CD14-positive monocyte (primary cell): ENCODE measurements at regions of chr7 and their contacts with region 1.

Region 1: DNA sequence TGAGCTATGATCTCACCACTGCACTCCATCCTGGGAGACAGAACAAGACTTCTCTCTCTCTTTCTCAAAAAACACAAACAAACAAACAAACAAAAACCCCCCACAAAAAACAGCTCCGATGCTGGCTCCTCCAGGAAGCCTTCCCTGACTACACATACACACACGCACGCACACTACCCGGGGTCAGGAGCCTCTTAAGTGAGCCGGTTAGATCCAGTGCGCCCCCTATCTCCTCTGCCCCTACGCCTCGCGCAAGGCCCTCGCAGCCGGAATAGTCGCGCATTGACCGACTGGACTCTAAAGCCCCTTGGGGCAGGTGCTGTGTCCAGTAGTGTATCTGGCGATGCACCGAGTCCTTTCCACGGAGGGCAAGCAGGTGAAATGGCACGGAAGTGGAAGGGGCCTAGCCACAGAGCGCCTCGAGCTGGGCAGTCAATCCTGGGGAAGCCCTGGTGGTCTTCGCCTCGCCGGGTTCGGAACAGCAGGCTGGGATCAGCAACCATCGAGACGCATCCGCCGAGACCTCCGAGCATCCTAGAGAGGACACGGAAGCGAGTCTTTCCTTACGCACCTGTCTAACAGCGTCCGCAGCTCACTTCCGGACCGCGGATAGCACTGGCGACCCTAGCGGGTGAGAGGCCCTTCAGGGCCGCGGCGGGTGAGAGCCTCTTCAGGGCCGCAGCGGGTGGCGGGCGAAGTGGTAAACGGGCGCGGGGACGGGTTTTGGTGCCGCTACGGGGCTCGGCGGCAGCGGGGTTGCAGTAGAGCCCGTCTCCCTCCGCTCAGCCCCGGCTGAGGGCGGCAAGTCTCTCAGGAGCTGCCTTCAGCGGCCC is at the start of gene ZSCAN25:
- DNase-seq: peak; percentile 75 to 77 (median 76)
- H3K4me3 ChIP-seq: peak within 1 kb of the TSS; percentile 62 to 99 (median 65)
- H3K4me3 Mint-ChIP-seq: peak within 1 kb of the TSS; percentile 97
- H3K27ac ChIP-seq: peak within 1 kb of the TSS; percentile 50 to 90
- H3K27ac Mint-ChIP-seq: peak within 1 kb of the TSS; percentile 79 to 93 (median 88)
- H3K4me1 ChIP-seq: peaks cover 13 to 20% of the 10 kb centered on the region in 2 donors
- H3K4me1 Mint-ChIP-seq: peaks cover 24% of the 10 kb centered on the region
- H3K27me3 ChIP-seq: peaks cover 2 to 13% of the 10 kb centered on the region in 2 donors
- H3K27me3 Mint-ChIP-seq: peaks cover 6 to 15% (median 9%) of the 10 kb centered on the region in 3 donors
- CTCF ChIP-seq: no peak
- polyA plus RNA-seq, gene ZSCAN25: 4.3 to 7.3 (median 6.1) TPM

Region 2: DNA sequence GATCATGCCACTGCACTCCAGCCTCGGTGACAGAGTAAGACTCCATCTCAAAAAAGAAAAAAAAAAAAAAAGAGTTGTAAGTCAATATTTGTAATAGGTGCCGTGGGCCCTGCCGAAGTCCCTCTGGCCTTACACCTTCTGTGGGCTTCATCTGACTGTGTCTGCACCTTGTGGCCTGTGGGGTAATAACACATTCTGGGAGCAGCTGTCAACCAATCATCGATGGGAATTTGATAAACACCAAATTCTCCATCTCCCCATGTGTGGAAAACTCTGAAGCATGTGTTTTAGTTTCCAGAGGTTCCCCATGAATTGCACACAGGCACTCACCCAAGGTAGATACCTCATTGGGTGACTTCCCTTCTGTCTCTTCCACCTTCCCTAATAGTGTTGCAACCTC is 127.3 kb before region 1 on chr7:
- intact Hi-C with region 1: no loop called
- DNase-seq: no peak
- H3K4me3 ChIP-seq: no peak overlapping the region
- H3K4me3 Mint-ChIP-seq: no peak overlapping the region
- H3K27ac ChIP-seq: no peak overlapping the region
- H3K27ac Mint-ChIP-seq: peak overlapping the region in 1 of 7 donors; percentile 23
- H3K4me1 ChIP-seq: no peaks in the 10 kb centered on the region
- H3K4me1 Mint-ChIP-seq: no peaks in the 10 kb centered on the region
- H3K27me3 ChIP-seq: no peaks in the 10 kb centered on the region
- H3K27me3 Mint-ChIP-seq: no peaks in the 10 kb centered on the region
- CTCF ChIP-seq: peak; percentile 12

Region 3: DNA sequence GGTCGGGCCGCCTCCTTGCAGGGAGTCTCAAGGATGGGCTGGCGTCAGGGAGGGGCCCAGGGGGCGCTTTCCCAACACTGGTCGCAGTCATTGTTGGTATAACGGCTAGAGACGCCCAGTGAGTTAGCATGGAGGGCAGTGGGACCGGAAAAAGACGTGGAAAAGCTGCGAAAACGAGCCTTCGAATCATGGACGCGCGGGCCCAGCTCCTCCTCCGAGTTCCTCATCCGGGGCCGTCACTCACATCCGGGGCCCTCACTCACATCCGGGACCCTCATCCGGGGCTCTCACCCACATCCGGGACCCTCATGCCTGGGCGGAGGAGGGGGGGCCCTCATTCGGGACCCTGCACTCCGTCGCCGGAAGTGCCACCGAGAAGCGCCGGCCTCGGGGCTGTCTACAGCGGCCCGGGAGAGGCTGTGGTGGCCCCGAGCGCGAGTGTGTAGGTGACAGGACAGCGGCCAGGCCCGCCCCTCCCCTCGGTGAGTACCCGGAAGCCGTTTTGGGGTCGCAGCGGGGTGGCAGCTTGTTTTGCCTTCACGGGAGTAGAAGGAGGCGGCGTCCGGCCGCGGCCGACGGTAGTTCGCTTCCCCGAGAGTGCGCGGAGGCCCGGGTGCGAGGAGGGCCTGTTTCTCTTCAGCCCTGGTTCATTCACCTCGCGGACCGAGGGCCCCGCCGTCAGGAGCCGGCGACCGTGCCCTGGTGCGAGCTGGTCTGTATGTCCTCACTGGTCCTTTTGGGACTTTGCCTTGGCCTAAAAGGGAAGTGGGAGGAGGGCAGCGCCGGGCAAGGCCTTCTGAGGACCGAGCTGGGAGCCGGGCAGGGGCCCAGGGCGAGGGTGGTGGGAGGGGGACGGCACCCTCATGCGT is 58.0 kb before region 1 on chr7 and contains the start of gene ZNF655:
- intact Hi-C with region 1: loop called in 1 of 2 experiments (anchors 5 kb)
- DNase-seq: peak; percentile 74 to 88 (median 84)
- H3K4me3 ChIP-seq: peak within 1 kb of the TSS; percentile 71 to 97 (median 80)
- H3K4me3 Mint-ChIP-seq: peak within 1 kb of the TSS; percentile 94 to 99
- H3K27ac ChIP-seq: peak within 1 kb of the TSS; percentile 94 to 99
- H3K27ac Mint-ChIP-seq: peak within 1 kb of the TSS; percentile 97 to 100 (median 99)
- H3K4me1 ChIP-seq: peaks cover 23 to 57% of the 10 kb centered on the region in 2 donors
- H3K4me1 Mint-ChIP-seq: peaks cover 51% of the 10 kb centered on the region
- H3K27me3 ChIP-seq: no peaks in the 10 kb centered on the region
- H3K27me3 Mint-ChIP-seq: peaks cover 0 to 2% (median 0%) of the 10 kb centered on the region in 3 donors
- CTCF ChIP-seq: no peak
- polyA plus RNA-seq, gene ZNF655: 61.6 to 151 (median 62.2) TPM

Region 4: DNA sequence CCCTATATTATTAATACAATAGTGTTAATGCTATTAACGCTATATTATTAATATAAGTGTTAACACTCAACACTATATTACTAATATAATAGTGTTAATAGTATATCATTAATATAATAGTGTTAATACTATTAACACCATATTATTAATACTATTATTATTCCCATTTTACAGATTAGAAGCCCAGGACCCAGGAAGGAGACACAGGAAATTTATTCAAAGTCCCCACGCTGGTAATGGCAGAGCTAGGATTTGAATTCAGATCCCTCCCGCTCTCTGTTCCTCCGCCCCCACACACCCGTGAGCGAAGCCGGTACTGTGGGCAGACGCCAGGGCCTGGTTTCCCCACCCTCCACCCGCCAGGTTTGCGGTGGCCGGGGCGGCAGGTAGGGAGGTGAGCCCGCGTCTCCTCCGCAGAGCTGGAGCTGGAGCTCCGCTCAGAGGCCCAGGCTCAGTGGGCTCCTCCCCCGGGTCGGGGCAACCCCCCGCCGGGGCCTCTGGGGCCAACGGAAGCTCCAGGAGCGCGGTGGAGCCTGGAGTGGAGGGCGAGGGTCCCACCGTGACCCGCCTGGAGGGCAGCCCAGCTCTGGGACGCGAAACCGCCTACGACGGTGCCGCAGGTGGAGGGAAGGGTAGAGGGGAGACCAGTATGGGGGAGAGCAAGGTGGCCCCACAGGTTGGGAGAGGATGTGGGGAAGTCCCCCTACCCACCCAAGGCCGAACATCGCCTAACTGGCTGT is 18.6 kb before region 1 on chr7 and contains the start of gene TMEM225B:
- intact Hi-C with region 1: no loop called
- DNase-seq: no peak
- H3K4me3 ChIP-seq: no peak within 1 kb of the TSS
- H3K4me3 Mint-ChIP-seq: no peak within 1 kb of the TSS
- H3K27ac ChIP-seq: no peak within 1 kb of the TSS
- H3K27ac Mint-ChIP-seq: no peak within 1 kb of the TSS
- H3K4me1 ChIP-seq: no peaks in the 10 kb centered on the region
- H3K4me1 Mint-ChIP-seq: peaks cover 1% of the 10 kb centered on the region
- H3K27me3 ChIP-seq: no peaks in the 10 kb centered on the region
- H3K27me3 Mint-ChIP-seq: peaks cover 2% of the 10 kb centered on the region in 3 donors
- CTCF ChIP-seq: no peak
- polyA plus RNA-seq, gene TMEM225B: 0.20 to 0.23 TPM in 2 of 3 donors, not detected in the other